Right ventricle myocardium inferior (tissue), 1 donor: ENCODE measurements at regions of chr1 and their contacts with region 1.

Region 1: GRCh38 chr1:98794196-98794886 is 132.8 kb downstream of the SNX7 start:
- DNase-seq: no peak
- ATAC-seq: no peak

Region 2: DNA sequence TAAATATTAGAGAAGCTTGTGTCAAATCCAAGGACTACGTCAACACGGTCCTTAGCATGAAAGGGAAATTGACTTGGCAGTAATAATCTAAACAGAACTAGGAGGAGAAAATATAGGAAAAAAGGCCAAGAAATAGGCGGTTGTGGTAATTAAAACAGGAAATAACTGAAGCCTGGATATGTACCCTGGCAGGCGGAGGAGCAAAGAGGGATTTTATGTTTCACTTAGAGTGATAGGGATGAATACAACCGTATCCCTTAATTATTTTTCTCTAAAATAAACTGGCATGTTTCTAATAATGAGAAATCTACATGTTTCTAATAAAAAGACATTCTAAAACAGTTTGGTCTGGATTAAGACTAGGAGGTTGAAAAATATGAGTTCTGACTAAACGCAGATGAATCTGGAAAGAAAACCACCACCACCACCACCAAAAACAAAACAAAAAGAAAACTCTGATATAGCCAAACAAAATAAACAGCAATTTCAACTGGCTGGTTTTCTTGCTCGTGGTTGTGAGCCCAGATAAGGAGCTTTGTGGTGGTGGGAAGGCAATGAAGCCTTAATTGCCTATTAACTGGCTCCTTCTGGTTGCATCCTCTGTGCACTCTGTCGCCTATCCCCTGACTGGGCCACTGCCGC is 467.0 kb before region 1 on chr1:
- intact Hi-C with region 1: no loop called
- DNase-seq: no peak
- ATAC-seq: no peak

Region 3: DNA sequence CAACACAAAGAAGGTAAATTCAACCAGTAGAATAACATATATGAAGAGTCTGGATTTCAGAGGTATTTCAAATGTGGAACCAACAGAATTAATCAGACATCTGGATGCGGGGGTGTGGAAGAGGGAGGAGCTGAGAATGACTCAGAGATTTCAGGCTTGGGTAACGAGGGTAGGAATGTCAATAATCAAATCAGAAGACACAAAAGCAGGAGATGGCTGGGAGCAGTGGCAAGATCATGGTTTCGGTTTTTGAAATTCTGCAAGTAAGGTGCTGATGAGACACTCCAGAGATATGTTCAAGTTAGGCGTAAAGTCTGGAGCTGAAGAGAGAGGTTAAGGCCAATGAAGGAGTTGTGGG is 146.4 kb after region 1 on chr1:
- intact Hi-C with region 1: no loop called
- DNase-seq: no peak
- ATAC-seq: no peak

Region 4: DNA sequence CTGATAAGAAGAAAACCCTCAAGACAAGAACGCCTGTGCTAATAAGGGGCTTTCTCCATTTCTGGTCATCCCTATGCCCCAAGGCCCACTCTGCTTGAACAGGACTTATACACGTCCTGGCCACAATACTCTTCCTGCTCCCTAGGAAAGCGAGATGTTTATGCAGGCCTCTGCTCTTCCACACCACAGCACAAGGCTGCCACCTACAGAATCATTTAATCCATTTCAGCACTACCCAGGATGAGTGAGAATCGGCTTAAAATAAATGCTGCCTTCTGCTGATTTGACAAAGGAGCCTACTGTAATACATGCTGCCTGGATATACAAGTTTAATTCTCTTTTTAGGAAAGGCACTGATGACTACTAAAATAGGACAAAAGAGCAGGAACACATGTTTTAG is 942.7 kb after region 1 on chr1:
- intact Hi-C with region 1: loop called (anchors 5 kb)
- DNase-seq: no peak
- ATAC-seq: peak; percentile 69